Activated T-helper 1 cell treated with anti-CD3 and anti-CD28 coated beads, Interleukin-12 subunit alpha, Interleukin-12 subunit beta, Interleukin-2, Interleukin-4 antibody, amounts not matched to agents 30 ng/mL and 10 ng/mL and 1 ng/mL, durations not matched to agents 14 hours and 24 hours and 36 hours (primary cell): ENCODE measurements at regions of chr1 and their contacts with region 1.

Region 1: DNA sequence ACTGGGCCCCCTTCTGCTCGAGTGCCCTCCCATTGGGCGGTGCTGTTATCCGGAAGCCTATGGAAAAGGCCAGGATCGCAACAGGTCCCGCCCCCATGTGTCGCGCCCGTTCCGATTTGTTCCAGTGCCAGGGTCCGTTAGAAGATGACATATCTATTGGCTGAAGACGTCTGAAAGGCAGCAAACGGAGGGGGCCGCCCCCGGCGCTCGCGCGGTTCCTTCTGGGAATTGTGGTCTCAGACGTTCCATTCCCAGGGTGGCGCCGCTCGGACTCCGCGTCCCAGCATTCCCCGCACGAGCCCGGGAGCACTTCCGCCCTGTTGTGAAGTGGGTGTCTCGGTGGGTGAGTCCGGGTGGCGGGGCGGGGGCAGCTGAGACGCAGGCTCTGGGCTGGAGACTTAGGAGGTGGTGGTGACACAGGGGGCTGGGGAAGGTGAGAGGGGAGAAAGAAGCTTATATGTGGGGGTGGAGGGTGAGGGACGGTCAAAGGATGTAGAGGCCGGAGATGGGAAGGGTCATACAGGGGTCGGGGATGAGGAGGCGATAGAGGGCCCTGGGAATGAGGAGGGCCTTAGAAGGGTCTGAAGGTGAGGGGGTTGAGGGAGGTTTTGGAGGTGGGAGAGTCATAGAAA is at the start of gene ZSCAN20:
- DNase-seq: peak; percentile 81
- H3K4me3 Mint-ChIP-seq: peak within 1 kb of the TSS; percentile 88
- H3K27ac Mint-ChIP-seq: peak within 1 kb of the TSS; percentile 68
- H3K4me1 Mint-ChIP-seq: peaks cover 24% of the 10 kb centered on the region
- H3K27me3 Mint-ChIP-seq: no peaks in the 10 kb centered on the region
- total RNA-seq, gene ZSCAN20: 2.5 and 2.8 TPM in 2 replicates

Region 2: DNA sequence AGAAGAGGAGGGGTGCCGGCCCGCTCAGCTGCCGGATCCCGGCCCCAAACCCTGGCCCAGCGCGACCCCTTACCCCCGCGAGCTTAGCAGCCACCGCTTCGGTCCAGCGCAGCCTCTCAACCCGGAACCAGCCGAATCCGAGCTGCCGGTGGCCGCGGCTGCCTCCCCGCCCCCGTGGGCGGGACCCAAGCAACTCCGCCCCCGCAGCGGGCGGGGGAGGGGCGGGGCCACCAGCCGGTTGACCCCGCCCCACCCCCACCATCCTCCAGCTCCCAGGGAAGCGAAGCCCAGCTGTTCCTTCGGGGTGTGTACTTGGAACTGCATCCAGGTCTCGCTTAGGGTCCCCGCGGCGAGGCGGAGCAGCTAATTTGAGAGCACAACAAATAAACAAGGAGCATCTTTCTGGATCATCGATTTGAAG is 290.5 kb before region 1 on chr1 and contains the start of gene TRIM62:
- intact Hi-C with region 1: loop called (anchors 2 kb)
- DNase-seq: peak; percentile 69
- H3K4me3 Mint-ChIP-seq: peak within 1 kb of the TSS; percentile 87
- H3K27ac Mint-ChIP-seq: peak within 1 kb of the TSS; percentile 81
- H3K4me1 Mint-ChIP-seq: peaks cover 28% of the 10 kb centered on the region
- H3K27me3 Mint-ChIP-seq: peaks cover 19% of the 10 kb centered on the region
- total RNA-seq, gene TRIM62: 4.1 and 4.5 TPM in 2 replicates

Region 3: GRCh38 chr1:33349778-33350610 is 122.5 kb before region 1 on chr1:
- intact Hi-C with region 1: loop called (anchors 1 kb)
- DNase-seq: peak; percentile 80
- H3K4me3 Mint-ChIP-seq: peak overlapping the region; percentile 92
- H3K27ac Mint-ChIP-seq: peak overlapping the region; percentile 91
- H3K4me1 Mint-ChIP-seq: peaks cover 42% of the 10 kb centered on the region
- H3K27me3 Mint-ChIP-seq: peaks cover under 1% of the 10 kb centered on the region

Region 4: DNA sequence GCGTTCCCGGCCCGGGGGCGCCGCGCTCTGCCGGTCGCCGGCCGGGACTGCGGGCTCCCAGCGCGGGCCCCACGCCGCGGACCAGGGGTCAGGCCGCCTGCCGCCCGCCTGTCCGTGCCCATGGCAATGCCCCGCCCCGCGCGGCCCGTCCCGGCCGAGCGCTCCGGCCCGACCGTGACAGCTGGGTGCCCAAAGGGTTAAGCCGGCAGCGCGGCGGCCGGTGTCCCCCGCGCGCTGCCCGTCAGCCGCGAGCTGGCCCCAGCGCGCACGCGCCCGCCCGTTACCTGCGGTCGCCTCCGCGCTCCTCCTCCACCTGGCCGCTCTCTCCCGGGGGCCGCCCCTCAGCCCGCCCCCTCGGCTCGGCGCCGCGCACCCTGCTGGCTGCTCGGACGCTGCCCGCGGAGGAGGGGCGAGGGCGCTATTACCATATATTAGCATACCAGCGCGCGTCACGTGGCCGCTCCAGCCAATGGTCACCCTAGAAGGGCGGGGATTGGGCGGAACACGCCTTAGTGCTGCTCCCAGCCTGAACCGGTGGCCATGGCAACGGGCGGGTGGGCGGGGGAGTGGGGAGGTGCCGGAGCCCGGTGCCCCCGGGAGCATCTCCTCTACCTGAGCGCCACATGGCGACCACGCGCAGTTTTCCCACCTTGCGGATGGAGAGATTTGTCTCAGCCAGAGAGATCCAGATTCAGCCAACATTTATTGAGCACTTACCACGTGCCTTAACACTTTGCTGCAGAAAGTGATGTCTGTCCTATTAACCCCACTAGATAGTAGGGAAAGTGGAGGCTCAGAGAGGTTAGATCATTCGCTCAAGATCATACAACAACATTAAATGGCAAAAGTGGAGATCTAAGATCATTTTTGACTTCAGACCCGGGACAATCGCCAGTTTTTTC is 41.5 kb before region 1 on chr1 and contains the start of gene PHC2:
- intact Hi-C with region 1: loop called (anchors 1 kb)
- DNase-seq: peak; percentile 82
- H3K4me3 Mint-ChIP-seq: peak within 1 kb of the TSS; percentile 57
- H3K27ac Mint-ChIP-seq: no peak within 1 kb of the TSS
- H3K4me1 Mint-ChIP-seq: peaks cover 4% of the 10 kb centered on the region
- H3K27me3 Mint-ChIP-seq: peaks cover 26% of the 10 kb centered on the region
- total RNA-seq, gene PHC2: 36.7 and 40.1 TPM in 2 replicates